GM12878 (cell line): ENCODE measurements at regions of chr4 and their contacts with region 1.

Region 1: GRCh38 chr4:11428899-11429698 is 405 bp upstream of the HS3ST1 start:
- DNase-seq: no peak
- ATAC-seq: peak; percentile 90
- H3K4me3 ChIP-seq: peak overlapping the region; percentile 75
- H3K27ac ChIP-seq: no peak overlapping the region
- H3K4me1 ChIP-seq: peaks cover 2% of the 10 kb centered on the region; the same call in 1 of the 2 replicates
- H3K27me3 ChIP-seq: peaks cover 2 to 8% of the 10 kb centered on the region in 2 experiments
- CTCF ChIP-seq: peak; percentile 57 to 61 (median 60); a peak in 5 of 6 replicates
- EP300 ChIP-seq: no peak
- POLR2A ChIP-seq: no peak
- RAD21 ChIP-seq: peak; percentile 35; the same call in 1 of the 2 replicates

Region 2: DNA sequence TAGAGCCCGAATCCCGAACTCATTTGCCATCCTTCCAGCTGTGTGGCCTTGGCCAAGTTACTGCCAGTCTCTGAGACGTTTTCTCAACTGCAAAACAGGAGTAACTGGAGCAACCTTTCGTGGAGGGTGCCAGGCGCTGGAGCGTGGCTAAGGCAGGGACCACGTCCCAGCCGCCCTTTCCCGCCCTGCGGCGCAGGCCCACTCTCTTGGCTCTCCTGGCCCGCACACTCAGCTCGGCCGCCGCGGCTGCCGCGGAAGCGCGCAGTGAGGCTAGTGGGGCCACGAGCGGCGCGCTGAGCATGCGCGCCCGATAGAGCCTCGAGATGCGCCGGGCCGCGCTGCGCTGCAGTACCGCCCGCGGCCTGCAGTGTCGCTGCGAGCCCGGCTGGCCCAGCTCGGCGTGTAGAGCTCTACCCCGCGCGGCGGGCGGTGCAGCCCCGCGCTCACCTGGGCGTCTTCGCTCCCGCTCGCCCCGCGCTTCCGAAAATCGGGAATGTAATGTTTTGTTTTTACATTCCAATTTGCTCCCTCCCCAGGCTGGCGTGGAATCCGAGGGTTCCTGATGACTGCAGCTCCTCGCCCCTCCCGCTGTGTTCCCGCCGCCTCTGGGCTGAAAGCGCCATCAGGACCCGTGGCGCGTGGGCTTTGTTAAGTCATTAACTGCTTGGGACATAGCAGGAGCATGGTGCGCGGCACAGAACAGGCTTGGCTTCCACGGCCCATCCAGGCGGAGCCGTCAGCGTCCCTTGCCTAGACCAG is 967.8 kb before region 1 on chr4:
- CTCF ChIA-PET with region 1: no interaction called
- POLR2A ChIA-PET with region 1: no interaction called
- RAD21 ChIA-PET with region 1: no interaction called
- SMC1A ChIA-PET with region 1: no interaction called
- in situ Hi-C with region 1: no loop called
- intact Hi-C with region 1: loop called (anchors 10 kb)
- DNase-seq: peak; percentile 31
- ATAC-seq: peak; percentile 84
- H3K4me3 ChIP-seq: peak overlapping the region; percentile 43; the same call in 1 of the 2 replicates
- H3K27ac ChIP-seq: no peak overlapping the region
- H3K4me1 ChIP-seq: no peaks in the 10 kb centered on the region
- H3K27me3 ChIP-seq: peaks cover 0 to 5% of the 10 kb centered on the region in 2 experiments; a peak in 3 of 4 replicates
- CTCF ChIP-seq: peak; percentile 85 to 90 (median 86)
- EP300 ChIP-seq: no peak
- POLR2A ChIP-seq: peak; percentile 42; the same call in 1 of the 2 replicates
- RAD21 ChIP-seq: peak; percentile 55

Region 3: GRCh38 chr4:11073621-11074051 is 355.5 kb before region 1 on chr4:
- CTCF ChIA-PET with region 1: interaction called, 4 read pairs
- POLR2A ChIA-PET with region 1: no interaction called
- RAD21 ChIA-PET with region 1: no interaction called
- SMC1A ChIA-PET with region 1: no interaction called
- in situ Hi-C with region 1: no loop called
- intact Hi-C with region 1: loop called (anchors 10 kb)
- DNase-seq: no peak
- ATAC-seq: no peak
- H3K4me3 ChIP-seq: no peak overlapping the region
- H3K27ac ChIP-seq: no peak overlapping the region
- H3K4me1 ChIP-seq: no peaks in the 10 kb centered on the region
- H3K27me3 ChIP-seq: no peaks in the 10 kb centered on the region
- CTCF ChIP-seq: no peak
- EP300 ChIP-seq: no peak
- POLR2A ChIP-seq: no peak
- RAD21 ChIP-seq: no peak

Region 4: GRCh38 chr4:11480683-11481082 is 51.6 kb after region 1 on chr4:
- CTCF ChIA-PET with region 1: no interaction called
- POLR2A ChIA-PET with region 1: no interaction called
- RAD21 ChIA-PET with region 1: no interaction called
- SMC1A ChIA-PET with region 1: no interaction called
- in situ Hi-C with region 1: no loop called
- intact Hi-C with region 1: no loop called
- DNase-seq: no peak
- ATAC-seq: peak; percentile 86
- H3K4me3 ChIP-seq: no peak overlapping the region
- H3K27ac ChIP-seq: no peak overlapping the region
- H3K4me1 ChIP-seq: peaks cover 5% of the 10 kb centered on the region
- H3K27me3 ChIP-seq: no peaks in the 10 kb centered on the region
- CTCF ChIP-seq: no peak
- EP300 ChIP-seq: no peak
- POLR2A ChIP-seq: no peak
- RAD21 ChIP-seq: no peak